ENCODE measurements at regions of chr15 and their contacts with region 1.

Region 1: DNA sequence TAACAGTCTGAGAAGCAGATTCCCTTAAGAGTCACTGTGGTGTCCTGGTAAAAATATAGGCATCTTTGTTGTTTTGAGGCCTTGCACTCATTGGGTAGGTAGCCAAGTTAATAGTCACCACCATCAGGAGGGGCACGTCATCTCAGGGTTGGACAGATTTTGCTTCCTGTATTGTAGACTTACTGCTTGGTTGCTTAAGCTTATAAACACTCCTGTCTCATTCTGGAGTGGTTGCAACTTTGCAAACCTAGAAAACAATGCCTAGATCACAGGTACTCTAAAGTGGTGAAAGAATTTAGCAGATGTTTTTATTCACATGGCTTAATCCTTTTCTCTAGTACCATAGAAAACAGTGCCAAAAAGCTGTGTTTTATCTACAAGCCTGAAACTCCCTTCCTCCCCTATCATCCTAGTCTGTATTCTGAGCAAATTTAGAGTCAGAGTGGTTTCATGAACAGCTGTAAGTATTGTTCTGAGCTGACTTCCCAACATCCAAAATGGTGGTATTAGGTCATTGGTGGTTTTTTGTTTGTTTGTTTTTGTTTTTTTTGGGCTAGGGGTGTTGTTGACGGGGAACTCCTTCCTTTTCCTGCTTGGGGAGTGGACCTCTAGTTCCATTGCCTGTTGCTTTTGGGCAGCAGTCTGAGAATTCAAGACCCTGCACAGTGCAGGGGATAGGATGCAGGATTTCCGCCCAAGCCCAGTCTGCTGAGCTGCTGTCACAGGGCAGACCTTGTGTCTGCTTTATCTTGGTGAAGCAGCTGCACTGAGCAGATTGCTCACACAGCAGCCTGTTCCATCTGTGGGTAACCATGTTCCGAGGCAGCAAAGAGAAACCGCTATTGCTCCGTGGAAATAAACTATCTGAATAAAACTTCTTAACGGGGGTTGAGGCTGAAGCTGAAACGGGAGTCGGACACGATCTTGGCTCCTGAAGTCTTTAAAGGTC is 202.0 kb downstream of the AKAP13 start:
- DNase-seq: peak; percentile 67
- H3K4me3 Mint-ChIP-seq: peak overlapping the region; percentile 84
- H3K27ac Mint-ChIP-seq: peak overlapping the region; percentile 95
- H3K4me1 Mint-ChIP-seq: peaks cover 84% of the 10 kb centered on the region
- H3K27me3 Mint-ChIP-seq: no peaks in the 10 kb centered on the region

Region 2: GRCh38 chr15:85443593-85444087 is 138.8 kb before region 1 on chr15:
- intact Hi-C with region 1: loop called (anchors 1 kb)
- DNase-seq: no peak
- H3K4me3 Mint-ChIP-seq: peak overlapping the region; percentile 6
- H3K27ac Mint-ChIP-seq: peak overlapping the region; percentile 84
- H3K4me1 Mint-ChIP-seq: peaks cover 28% of the 10 kb centered on the region
- H3K27me3 Mint-ChIP-seq: peaks cover 2% of the 10 kb centered on the region

Region 3: DNA sequence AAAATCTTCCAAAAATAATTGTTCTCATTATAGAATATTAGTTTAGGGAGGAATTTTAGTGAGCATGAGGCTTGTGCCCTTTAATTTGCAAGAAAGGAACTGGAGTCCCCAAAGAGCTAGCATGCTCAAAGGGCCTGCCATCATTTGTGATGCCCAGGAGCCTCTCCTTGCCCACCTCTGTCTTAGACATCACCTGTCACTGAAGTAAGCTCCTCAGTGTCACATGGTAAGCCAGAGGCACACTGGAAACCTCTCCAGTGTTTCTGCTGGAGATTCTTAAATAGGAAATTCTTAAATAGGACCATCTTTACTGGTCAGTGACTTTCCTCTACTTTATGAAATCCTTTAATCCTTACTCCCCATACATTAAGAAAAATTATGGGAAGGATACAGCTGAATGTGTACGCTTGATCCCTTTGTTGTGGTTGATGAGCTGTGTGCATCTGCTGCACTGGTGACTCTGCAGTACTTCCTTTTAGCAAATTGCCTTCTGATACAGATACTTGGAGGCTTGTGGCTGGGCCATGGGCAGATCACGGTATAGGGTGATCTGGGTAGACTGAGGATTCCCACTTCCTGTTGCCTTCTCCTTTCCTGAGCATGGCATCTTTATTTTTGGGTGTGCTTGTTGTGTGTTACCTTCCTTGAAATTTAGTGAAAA is 14.9 kb after region 1 on chr15:
- intact Hi-C with region 1: loop called (anchors 1 kb)
- DNase-seq: peak; percentile 21
- H3K4me3 Mint-ChIP-seq: peak overlapping the region; percentile 53
- H3K27ac Mint-ChIP-seq: peak overlapping the region; percentile 41
- H3K4me1 Mint-ChIP-seq: peaks cover 52% of the 10 kb centered on the region
- H3K27me3 Mint-ChIP-seq: no peaks in the 10 kb centered on the region

Region 4: DNA sequence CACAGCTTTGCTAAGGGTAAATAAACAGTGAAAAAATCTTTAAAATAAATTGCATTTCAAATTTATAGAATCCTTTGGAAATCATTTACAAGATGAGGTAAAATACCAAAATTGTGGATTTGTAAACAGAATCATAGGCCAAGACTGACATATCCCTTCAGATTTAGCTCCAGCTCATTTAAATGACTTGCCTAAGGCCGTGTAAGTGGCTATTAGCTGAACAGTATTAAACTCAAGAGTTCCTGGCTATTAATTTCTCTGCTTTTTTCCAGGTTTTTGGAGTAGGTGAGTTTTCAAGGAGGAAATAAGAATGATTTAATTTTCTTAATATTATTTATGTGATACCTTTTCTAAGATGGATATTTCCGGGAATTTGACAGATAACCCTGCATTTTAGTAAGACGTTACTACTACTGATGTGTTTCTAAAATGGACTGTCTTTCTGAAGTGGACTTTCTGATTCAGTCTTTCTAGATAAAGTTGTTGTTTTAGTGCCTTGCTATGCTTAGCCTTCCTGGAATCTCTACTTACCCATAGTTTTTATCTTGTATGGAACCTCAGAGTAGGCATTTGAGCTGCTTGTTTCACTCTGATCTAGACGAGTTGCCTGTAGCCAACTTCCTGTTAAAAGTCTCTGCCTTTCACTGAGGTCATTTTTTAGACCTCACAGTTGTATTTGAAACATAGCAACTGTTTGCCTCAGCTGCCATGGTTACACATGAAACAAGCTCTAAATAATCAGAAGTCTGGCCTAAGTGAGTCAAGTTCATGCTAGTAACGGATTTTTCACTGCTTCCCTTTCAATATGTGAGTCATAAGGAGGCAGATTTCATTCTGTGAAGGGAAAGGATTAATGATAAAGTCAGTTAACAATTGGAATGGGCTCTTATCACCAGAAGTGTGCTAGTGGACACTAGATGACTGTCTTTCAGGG is 85.4 kb after region 1 on chr15:
- intact Hi-C with region 1: loop called (anchors 1 kb)
- DNase-seq: peak; percentile 46
- H3K4me3 Mint-ChIP-seq: peak overlapping the region; percentile 20
- H3K27ac Mint-ChIP-seq: peak overlapping the region; percentile 97
- H3K4me1 Mint-ChIP-seq: peaks cover 22% of the 10 kb centered on the region
- H3K27me3 Mint-ChIP-seq: no peaks in the 10 kb centered on the region

Measured in activated T-helper 1 cell treated with anti-CD3 and anti-CD28 coated beads, Interleukin-12 subunit alpha, Interleukin-12 subunit beta, Interleukin-2, Interleukin-4 antibody, amounts not matched to agents 30 ng/mL and 10 ng/mL and 1 ng/mL, durations not matched to agents 14 hours and 24 hours and 36 hours (primary cell).